ENCODE measurements at regions of chr13 and their contacts with region 1.

Region 1: GRCh38 chr13:38872693-38873092 is 117.9 kb downstream of the STOML3 start:
- DNase-seq: peak; percentile 9 to 57 (median 30)
- ATAC-seq: peak; percentile 81
- H3K4me3 ChIP-seq: no peak overlapping the region
- H3K27ac ChIP-seq: no peak overlapping the region
- H3K4me1 ChIP-seq: no peaks in the 10 kb centered on the region
- H3K27me3 ChIP-seq: no peaks in the 10 kb centered on the region
- CTCF ChIP-seq: peak; percentile 63 to 81 (median 66)
- EP300 ChIP-seq: no peak
- POLR2A ChIP-seq: no peak
- RAD21 ChIP-seq: peak; percentile 23 to 49; a peak in 2 of 4 replicates

Region 2: DNA sequence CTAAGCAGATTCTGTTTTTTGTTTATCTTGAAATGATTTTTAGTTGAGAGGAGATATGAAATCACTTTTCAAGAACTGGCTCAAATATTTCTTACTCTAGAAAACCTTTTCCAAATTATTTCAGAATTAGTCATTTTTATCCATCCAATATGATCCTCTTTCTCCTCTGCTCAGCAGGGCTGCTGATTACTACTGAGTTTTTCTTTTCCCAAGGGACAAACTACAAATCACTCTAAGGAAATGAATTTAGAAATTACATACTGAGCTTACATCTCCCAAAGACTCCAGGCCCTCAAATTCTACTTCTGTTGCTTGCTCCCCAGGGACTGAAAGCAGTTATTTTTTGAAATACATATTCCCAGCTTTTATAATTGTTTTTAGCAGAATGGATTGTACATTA is 610.5 kb before region 1 on chr13:
- CTCF ChIA-PET with region 1: no interaction called
- POLR2A ChIA-PET with region 1: no interaction called
- in situ Hi-C with region 1: no loop called
- intact Hi-C with region 1: no loop called
- DNase-seq: no peak
- ATAC-seq: no peak
- H3K4me3 ChIP-seq: no peak overlapping the region
- H3K27ac ChIP-seq: no peak overlapping the region
- H3K4me1 ChIP-seq: no peaks in the 10 kb centered on the region
- H3K27me3 ChIP-seq: no peaks in the 10 kb centered on the region
- CTCF ChIP-seq: no peak
- EP300 ChIP-seq: no peak
- POLR2A ChIP-seq: no peak
- RAD21 ChIP-seq: no peak

Region 3: DNA sequence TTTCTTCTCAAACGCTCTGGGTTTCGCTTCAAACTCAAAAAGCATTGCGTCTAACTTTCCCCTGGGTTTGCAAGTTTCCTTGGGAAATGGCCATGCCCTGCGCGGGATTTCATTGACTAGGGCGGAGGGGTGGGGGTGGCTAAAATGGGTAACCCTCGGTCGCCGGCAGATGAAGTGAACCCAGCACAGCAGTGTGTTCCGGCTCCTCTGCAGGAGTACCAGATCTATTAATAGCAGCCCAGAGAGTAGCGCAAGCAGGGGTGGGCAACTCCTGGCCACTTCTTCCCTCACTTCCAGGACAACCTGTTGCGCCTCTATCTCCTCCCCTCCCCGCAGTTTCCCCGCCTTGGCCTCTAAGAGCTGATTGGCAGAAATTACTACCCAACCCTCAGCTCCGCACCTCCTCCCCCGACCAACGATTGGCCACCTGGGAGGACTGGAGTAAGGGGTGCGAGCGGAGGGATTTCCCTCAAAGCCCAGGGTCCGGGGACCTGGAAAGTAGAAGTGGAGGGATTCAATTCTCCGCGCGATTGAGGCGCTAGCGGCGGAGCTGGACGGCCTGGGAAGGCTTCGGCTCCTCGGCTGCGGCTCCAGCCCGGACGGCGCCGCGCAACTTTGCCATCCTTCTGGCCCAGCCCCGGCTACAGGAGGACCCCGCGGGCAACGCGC is 186.0 kb before region 1 on chr13 and contains the start of gene FREM2:
- CTCF ChIA-PET with region 1: no interaction called
- POLR2A ChIA-PET with region 1: no interaction called
- in situ Hi-C with region 1: no loop called
- intact Hi-C with region 1: loop called (anchors 5 kb)
- DNase-seq: no peak
- ATAC-seq: no peak
- H3K4me3 ChIP-seq: no peak within 1 kb of the TSS
- H3K27ac ChIP-seq: no peak within 1 kb of the TSS
- H3K4me1 ChIP-seq: no peaks in the 10 kb centered on the region; a peak in 1 of 5 replicates
- H3K27me3 ChIP-seq: peaks cover 0 to 18% of the 10 kb centered on the region in 2 experiments; a peak in 2 of 5 replicates
- CTCF ChIP-seq: no peak
- EP300 ChIP-seq: no peak
- POLR2A ChIP-seq: no peak
- RAD21 ChIP-seq: no peak
- polyA plus RNA-seq, gene FREM2: not detected

Region 4: DNA sequence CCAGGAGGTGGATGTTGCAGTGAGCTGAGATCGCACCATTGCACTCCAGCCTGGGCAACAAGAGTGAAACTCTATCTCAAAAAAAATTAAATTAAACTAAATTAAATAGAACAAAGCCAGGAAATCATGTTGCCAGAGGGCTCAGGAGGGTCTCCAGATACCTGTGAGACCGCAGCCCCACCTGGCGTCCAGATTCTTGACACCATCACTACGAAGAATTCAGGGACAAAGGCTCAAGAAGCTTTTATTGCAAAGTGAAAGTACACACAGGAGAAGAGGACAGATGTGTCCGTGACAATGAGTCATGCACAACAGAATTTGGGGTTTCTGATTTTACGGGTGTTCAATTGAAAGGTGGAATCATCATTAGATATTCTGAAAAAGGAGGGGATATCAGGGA is 41.4 kb after region 1 on chr13:
- CTCF ChIA-PET with region 1: no interaction called
- POLR2A ChIA-PET with region 1: no interaction called
- in situ Hi-C with region 1: no loop called
- intact Hi-C with region 1: no loop called
- DNase-seq: no peak
- ATAC-seq: no peak
- H3K4me3 ChIP-seq: no peak overlapping the region
- H3K27ac ChIP-seq: no peak overlapping the region
- H3K4me1 ChIP-seq: no peaks in the 10 kb centered on the region
- H3K27me3 ChIP-seq: no peaks in the 10 kb centered on the region
- CTCF ChIP-seq: no peak
- EP300 ChIP-seq: no peak
- POLR2A ChIP-seq: no peak
- RAD21 ChIP-seq: no peak

Measured in K562 (cell line).